OCI-LY7 (cell line): ENCODE measurements at regions of chr7 and their contacts with region 1.

Region 1: DNA sequence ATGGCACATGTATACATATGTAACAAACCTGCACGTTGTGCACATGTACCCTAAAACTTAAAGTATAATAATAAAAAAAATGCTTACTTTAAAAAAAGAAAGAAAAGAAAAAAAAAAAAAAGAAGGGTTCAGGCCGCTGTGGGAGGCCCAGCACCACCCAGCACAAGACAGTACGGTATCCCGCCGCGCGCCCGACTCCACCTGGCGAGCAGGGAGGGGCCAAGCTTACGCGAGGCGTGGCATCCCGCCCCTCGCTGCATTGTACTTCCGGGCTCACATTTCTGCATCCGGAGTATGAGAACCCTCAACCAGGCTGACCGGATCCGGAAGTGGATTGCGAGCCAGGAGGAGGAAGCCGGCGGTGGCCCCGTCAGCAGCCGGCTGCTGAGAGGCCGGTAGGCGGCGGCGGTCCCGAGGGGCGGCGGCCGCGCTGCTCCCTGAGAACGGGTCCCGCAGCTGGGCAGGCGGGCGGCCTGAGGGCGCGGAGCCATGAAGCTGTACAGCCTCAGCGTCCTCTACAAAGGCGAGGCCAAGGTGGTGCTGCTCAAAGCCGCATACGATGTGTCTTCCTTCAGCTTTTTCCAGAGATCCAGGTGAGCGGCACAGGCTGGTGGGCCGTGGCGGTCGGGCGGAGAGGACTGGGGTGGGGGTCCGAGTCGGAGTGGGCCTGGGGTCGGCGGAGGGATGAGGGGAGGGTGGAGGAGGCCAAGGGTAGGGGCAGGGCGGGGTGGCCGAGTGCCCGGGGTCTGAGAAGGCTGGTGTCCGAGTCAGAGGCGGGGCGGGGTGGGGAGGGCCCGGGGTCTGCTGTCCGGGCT is at the start of gene YKT6:
- DNase-seq: peak; percentile 99
- H3K4me3 ChIP-seq: peak within 1 kb of the TSS; percentile 92
- H3K27ac ChIP-seq: peak within 1 kb of the TSS; percentile 21
- H3K4me1 ChIP-seq: peaks cover 28% of the 10 kb centered on the region
- CTCF ChIP-seq: peak; percentile 62
- total RNA-seq, gene YKT6: 41.1 and 50.6 TPM in 2 replicates

Region 2: GRCh38 chr7:44044315-44045225 is 156.3 kb before region 1 on chr7 and contains the start of gene DBNL:
- CTCF ChIA-PET with region 1: no interaction called
- POLR2A ChIA-PET with region 1: no interaction called
- intact Hi-C with region 1: loop called (anchors 1 kb)
- DNase-seq: peak; percentile 89
- H3K4me3 ChIP-seq: peak within 1 kb of the TSS; percentile 92
- H3K27ac ChIP-seq: peak within 1 kb of the TSS; percentile 80
- H3K4me1 ChIP-seq: peaks cover 42% of the 10 kb centered on the region
- CTCF ChIP-seq: no peak
- total RNA-seq, gene DBNL: 124 and 133 TPM in 2 replicates

Region 3: DNA sequence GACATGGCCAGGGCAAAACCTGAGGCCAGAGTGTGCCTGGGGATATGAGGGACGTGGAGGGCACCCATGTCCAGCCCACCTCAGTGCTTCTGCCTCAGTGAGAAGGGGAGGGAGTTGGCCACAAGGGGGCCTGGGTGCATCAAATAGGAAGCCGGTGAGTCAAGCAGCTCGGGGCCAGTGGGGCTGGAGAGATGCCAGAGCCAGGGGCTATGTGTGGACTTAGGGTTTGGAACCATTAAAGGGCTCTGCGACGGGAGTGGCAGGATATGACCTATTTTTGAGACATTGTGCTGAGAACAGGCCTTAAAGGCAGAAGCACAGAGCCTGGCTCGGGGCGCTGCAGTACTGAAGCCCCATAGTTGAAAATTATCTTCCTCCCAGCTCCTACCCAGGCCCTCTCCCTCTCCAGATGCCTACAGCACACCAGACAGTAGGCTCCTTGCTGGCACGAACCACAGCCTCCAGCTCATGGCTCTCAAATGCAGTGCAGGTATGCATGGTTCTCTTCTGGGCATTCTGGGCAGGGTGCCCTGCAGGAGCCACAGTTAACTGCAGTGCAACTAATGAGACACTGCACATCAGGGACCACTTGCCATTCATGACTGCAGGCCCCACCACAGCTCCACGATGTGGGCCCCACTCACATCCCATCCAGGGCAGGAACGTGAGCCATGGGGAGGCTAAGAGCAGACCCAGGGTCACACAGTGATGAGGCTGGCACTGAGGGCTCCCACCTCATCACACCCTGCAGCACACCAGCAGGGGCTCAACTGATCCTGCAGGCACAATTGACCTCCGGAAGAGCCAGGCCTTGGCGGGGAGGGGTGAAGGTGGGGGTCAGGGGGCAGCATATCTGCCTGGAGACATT is 128.3 kb before region 1 on chr7:
- CTCF ChIA-PET with region 1: no interaction called
- POLR2A ChIA-PET with region 1: interaction called, 8 read pairs
- intact Hi-C with region 1: loop called (anchors 1 kb)
- DNase-seq: peak; percentile 79
- H3K4me3 ChIP-seq: no peak overlapping the region
- H3K27ac ChIP-seq: peak overlapping the region; percentile 2
- H3K4me1 ChIP-seq: peaks cover 18% of the 10 kb centered on the region
- CTCF ChIP-seq: peak; percentile 89

Region 4: GRCh38 chr7:44123190-44124003 is 77.5 kb before region 1 on chr7 and contains the start of gene POLD2:
- CTCF ChIA-PET with region 1: no interaction called
- POLR2A ChIA-PET with region 1: interaction called, 8 read pairs
- intact Hi-C with region 1: loop called (anchors 2 kb)
- DNase-seq: peak; percentile 97
- H3K4me3 ChIP-seq: peak within 1 kb of the TSS; percentile 87
- H3K27ac ChIP-seq: peak within 1 kb of the TSS; percentile 43
- H3K4me1 ChIP-seq: peaks cover 41% of the 10 kb centered on the region
- CTCF ChIP-seq: no peak
- total RNA-seq, gene POLD2: 205 and 230 TPM in 2 replicates